Caco-2 (cell line): ENCODE measurements at regions of chr15 and their contacts with region 1.

Region 1: GRCh38 chr15:85485956-85486567 is 105.7 kb downstream of the AKAP13 start:
- DNase-seq: peak; percentile 56 to 72
- H3K4me3 ChIP-seq: no peak overlapping the region
- H3K4me3 Mint-ChIP-seq: no peak overlapping the region
- H3K27ac Mint-ChIP-seq: no peak overlapping the region
- H3K4me1 ChIP-seq: peaks cover 7% of the 10 kb centered on the region
- H3K4me1 Mint-ChIP-seq: peaks cover 30% of the 10 kb centered on the region
- H3K27me3 ChIP-seq: no peaks in the 10 kb centered on the region
- H3K27me3 Mint-ChIP-seq: no peaks in the 10 kb centered on the region
- CTCF ChIP-seq: peak in 1 of 2 experiments; percentile 61

Region 2: GRCh38 chr15:85296615-85297402 is 189.3 kb before region 1 on chr15:
- CTCF ChIA-PET with region 1: interaction called, 3 read pairs
- POLR2A ChIA-PET with region 1: no interaction called
- intact Hi-C with region 1: loop called (anchors 2 kb)
- DNase-seq: peak; percentile 70 to 79
- H3K4me3 ChIP-seq: peak overlapping the region; percentile 10; the same call in 1 of the 2 replicates
- H3K4me3 Mint-ChIP-seq: peak overlapping the region; percentile 48
- H3K27ac Mint-ChIP-seq: peak overlapping the region; percentile 15
- H3K4me1 ChIP-seq: no peaks in the 10 kb centered on the region
- H3K4me1 Mint-ChIP-seq: peaks cover 7% of the 10 kb centered on the region
- H3K27me3 ChIP-seq: no peaks in the 10 kb centered on the region
- H3K27me3 Mint-ChIP-seq: peaks cover 2% of the 10 kb centered on the region
- CTCF ChIP-seq: peak; percentile 68 to 76

Region 3: DNA sequence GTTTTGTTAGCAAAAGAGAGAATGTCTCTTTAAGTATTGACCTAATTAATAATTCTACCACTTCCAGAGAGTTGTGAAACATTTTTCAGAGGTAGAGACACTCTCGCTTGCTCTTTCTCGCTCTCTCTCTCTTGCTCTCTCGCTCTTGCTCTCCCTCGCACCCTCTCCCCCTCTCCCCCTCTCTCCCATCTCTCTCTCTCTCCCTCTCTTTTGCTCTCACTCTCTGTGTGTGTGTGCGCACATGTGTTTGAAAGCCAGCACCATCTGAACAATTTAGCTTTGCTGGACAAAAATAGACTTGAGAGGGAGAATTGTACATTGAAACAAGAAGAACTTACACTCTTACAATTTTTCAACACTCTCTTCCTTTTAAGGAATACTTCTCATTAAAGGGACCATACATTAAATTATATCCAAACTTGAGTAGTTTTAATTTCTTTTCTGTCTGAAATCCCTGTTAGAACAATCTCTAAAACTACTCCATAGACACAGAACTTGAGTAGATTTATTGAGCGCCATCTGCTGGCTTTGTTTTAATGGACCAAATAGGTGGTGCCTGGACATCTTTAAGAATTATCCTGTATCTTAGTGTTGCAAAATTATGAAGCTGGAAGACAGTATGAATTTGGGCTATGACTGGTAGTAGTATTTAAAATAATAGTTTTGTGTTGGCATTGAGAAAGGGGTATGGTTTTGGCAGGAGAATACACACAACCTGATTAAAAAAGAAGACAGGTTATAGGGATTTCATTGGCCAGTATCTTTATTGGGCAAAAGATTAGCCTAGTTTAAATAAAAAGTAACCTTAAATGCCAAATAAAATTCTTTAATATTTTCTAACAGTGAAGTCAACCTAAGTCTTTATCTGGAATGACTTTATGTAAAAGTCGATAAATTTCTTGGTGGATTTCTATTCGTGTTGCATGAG is 19.0 kb after region 1 on chr15:
- CTCF ChIA-PET with region 1: interaction called, 3 read pairs
- POLR2A ChIA-PET with region 1: no interaction called
- intact Hi-C with region 1: loop called (anchors 1 kb)
- DNase-seq: peak in 1 of 2 experiments; percentile 56
- H3K4me3 ChIP-seq: no peak overlapping the region
- H3K4me3 Mint-ChIP-seq: no peak overlapping the region
- H3K27ac Mint-ChIP-seq: no peak overlapping the region
- H3K4me1 ChIP-seq: 0 out of 2 replicates have a peak, but pooled peaks cover 5% of the 10 kb centered on the region
- H3K4me1 Mint-ChIP-seq: peaks cover 16% of the 10 kb centered on the region
- H3K27me3 ChIP-seq: no peaks in the 10 kb centered on the region
- H3K27me3 Mint-ChIP-seq: no peaks in the 10 kb centered on the region
- CTCF ChIP-seq: peak; percentile 38 to 57

Region 4: DNA sequence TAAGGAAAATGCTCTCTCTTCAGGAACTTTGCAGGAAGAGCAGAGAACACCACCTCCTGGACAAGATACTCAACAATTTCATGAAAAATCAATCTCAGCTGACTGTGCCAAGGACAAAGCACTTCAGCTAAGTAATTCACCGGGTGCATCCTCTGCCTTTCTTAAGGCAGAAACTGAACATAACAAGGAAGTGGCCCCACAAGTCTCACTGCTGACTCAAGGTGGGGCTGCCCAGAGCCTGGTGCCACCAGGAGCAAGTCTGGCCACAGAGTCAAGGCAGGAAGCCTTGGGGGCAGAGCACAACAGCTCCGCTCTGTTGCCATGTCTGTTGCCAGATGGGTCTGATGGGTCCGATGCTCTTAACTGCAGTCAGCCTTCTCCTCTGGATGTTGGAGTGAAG is 94.8 kb after region 1 on chr15:
- CTCF ChIA-PET with region 1: no interaction called
- POLR2A ChIA-PET with region 1: no interaction called
- intact Hi-C with region 1: loop called (anchors 1 kb)
- DNase-seq: no peak
- H3K4me3 ChIP-seq: no peak overlapping the region
- H3K4me3 Mint-ChIP-seq: no peak overlapping the region
- H3K27ac Mint-ChIP-seq: no peak overlapping the region
- H3K4me1 ChIP-seq: peaks cover 21% of the 10 kb centered on the region
- H3K4me1 Mint-ChIP-seq: peaks cover 15% of the 10 kb centered on the region
- H3K27me3 ChIP-seq: no peaks in the 10 kb centered on the region
- H3K27me3 Mint-ChIP-seq: no peaks in the 10 kb centered on the region
- CTCF ChIP-seq: no peak

Region 5: GRCh38 chr15:85707519-85708338 is 221.7 kb after region 1 on chr15:
- CTCF ChIA-PET with region 1: no interaction called
- POLR2A ChIA-PET with region 1: no interaction called
- intact Hi-C with region 1: loop called (anchors 5 kb)
- DNase-seq: peak; percentile 65 to 71
- H3K4me3 ChIP-seq: no peak overlapping the region
- H3K4me3 Mint-ChIP-seq: peak overlapping the region; percentile 66
- H3K27ac Mint-ChIP-seq: peak overlapping the region; percentile 77
- H3K4me1 ChIP-seq: peaks cover 32% of the 10 kb centered on the region
- H3K4me1 Mint-ChIP-seq: peaks cover 35% of the 10 kb centered on the region
- H3K27me3 ChIP-seq: no peaks in the 10 kb centered on the region
- H3K27me3 Mint-ChIP-seq: no peaks in the 10 kb centered on the region
- CTCF ChIP-seq: no peak